AG04449 (cell line): ENCODE measurements at regions of chr4 and their contacts with region 1.

Region 1: GRCh38 chr4:69167300-69167699 is 47.2 kb downstream of the UGT2B11 start:
- DNase-seq: no peak
- H3K4me3 ChIP-seq: no peak overlapping the region
- CTCF ChIP-seq: no peak

Region 2: GRCh38 chr4:68498413-68499007 is 668.8 kb before region 1 on chr4:
- CTCF ChIA-PET with region 1: interaction called, 30 read pairs
- POLR2A ChIA-PET with region 1: no interaction called
- DNase-seq: peak; percentile 16
- H3K4me3 ChIP-seq: no peak overlapping the region
- CTCF ChIP-seq: peak; percentile 77

Region 3: DNA sequence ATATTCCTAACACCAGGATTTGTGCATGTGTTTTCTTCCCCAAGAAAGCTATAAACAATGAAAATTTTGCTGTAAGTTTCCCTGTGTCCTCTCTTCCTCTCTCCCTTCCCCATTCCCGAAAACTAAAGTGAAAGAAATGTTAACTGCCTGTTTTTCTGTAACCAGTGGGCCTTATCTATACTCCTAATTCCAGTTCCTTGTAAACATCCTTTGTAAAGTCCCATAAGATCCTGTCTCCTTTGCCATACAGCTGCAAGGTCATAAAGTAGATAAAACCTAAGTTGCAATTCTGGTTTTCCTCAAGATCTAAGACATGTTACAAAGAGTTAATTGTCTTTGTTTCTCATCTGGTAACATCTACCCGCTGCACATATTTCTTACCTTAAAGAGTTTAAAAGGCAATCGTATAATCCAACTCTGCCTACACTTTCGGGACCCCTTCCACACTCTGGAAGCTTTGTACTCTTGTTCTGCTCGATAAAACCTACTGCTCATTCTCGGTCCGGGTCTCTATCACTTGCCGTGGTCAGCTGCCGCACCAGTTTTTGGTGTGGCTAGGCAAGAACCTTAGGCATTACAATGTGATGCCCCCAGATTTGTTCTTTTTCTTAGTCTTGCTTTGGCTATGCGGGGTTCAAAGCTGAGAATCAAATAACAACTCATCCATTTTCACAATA is 50.5 kb before region 1 on chr4:
- CTCF ChIA-PET with region 1: no interaction called
- POLR2A ChIA-PET with region 1: no interaction called
- DNase-seq: no peak
- H3K4me3 ChIP-seq: no peak overlapping the region
- CTCF ChIP-seq: no peak